ENCODE measurements at regions of chr16 and their contacts with region 1.

Region 1: GRCh38 chr16:30698139-30698815 is 694 bp upstream of the SRCAP start:
- DNase-seq: peak; percentile 60 to 99 (median 88)

Region 2: DNA sequence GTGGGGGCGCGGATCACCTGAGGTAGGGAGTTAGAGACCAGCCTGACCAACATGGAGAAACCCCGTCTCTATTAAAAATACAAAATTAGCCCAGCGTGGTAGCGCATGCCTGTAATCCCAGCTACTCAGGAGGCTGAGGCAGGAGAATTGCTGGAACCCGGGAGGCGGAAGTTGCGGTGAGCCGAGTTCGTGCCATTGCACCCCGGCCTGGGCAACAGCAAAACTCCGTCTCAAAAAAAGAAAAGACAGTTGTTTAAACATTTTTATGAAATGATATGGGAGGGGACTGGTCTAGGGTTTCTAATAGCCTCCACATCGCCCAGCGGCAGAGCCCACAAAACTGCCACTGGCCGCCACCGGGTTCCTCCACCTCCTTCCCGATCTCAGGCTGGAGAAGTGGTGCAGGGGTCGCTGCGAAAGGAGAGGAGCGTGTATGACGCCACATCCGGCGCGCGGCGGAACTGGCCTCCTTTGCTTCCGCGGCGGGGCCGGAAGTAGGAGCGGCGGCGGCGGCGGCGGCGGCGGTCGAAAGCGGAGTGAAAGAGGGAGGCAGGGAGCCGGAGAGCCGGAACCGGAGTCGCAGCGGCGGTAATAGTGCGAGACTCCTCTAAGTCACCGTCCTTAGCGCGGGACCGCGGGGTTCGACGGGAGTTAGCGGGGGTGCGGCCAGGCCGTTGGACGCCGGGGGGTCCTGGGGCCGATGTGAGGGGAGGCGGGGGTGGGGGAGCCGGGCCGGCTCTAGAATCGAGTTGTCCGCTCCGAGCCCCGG is 622.6 kb before region 1 on chr16 and contains the start of gene PPP4C:
- intact Hi-C with region 1: loop called (anchors 5 kb)
- DNase-seq: peak; percentile 77 to 96 (median 92)

Region 3: GRCh38 chr16:30571695-30572600 is 126.3 kb before region 1 on chr16 and contains the start of gene ZNF688:
- intact Hi-C with region 1: no loop called
- DNase-seq: peak; percentile 88 to 98 (median 95)

Region 4: DNA sequence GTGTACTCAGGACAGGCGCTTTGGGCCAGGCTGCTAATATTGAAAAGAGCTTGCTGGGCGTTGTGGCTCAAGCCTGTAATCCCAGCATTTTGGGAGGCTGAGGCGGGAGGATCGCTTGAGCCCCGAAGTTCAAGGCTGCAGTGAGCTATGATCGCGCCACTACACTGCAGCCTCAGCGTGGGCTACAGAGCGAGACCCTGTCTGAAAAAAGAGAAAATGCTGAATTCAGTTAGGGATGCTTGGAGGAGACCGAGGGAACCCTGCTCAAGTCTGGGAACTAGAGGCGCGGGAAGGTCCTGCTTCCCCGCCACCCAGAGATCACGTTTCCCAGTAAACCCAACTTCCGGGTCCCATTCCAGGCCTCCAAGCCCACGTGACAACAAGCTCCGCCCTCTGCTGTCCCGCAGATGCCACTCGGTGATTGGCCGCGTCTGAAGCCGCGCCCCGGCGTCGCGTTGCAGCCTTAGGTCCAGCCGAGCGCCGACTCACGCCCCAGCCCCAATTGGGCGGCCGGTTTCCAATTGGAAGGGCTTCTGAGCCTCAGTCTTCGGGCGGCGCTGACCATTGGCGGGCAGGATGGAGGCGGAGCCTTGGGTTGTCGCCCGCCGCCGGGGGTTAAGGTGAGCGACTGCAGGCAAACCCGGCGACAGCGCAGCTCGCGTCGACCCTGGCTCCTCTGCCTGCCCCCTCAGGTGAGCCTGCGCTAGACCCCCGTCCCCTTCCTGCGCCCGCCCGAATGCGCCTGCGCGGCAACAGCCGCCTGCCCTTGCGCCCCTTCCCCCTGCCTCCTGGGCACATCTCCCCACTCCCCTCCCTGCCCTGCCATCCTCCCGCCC is 49.7 kb after region 1 on chr16 and contains the start of gene PHKG2:
- intact Hi-C with region 1: loop called (anchors 5 kb)
- DNase-seq: peak; percentile 98 to 100 (median 99)